IMR-90 (cell line): ENCODE measurements at regions of chr15 and their contacts with region 1.

Region 1: GRCh38 chr15:61243983-61244593 is 15.0 kb upstream of the RORA start:
- DNase-seq: no peak
- ATAC-seq: no peak
- H3K4me3 ChIP-seq: no peak overlapping the region
- H3K27ac ChIP-seq: no peak overlapping the region
- H3K4me1 ChIP-seq: no peaks in the 10 kb centered on the region
- H3K27me3 ChIP-seq: peaks cover 2% of the 10 kb centered on the region; the same call in 1 of the 2 replicates
- CTCF ChIP-seq: no peak
- POLR2A ChIP-seq: no peak
- RAD21 ChIP-seq: no peak

Region 2: DNA sequence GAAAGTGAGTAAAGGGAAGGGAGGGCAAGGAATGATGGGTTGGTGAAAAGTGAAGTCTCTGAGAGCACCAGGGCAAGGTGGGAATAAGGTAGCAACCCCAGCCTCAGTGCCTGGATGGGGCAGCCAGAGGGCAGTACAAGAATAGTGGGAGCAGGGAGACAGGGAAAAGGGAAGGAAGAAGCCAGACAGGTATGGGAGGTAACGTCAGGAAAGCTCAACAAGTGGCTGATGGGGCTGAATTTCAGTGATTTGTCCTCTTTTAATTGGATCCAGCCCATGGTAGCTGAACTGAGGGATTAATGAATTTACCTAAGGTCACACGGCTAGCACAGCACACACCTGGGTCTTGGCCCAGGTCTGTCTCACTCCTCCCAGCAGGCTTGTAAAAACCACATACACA is 27.6 kb before region 1 on chr15:
- CTCF ChIA-PET with region 1: interaction called, 10 read pairs
- POLR2A ChIA-PET with region 1: no interaction called
- dilution Hi-C with region 1: no loop called
- in situ Hi-C with region 1: no loop called
- intact Hi-C with region 1: no loop called
- DNase-seq: no peak
- ATAC-seq: no peak
- H3K4me3 ChIP-seq: no peak overlapping the region
- H3K27ac ChIP-seq: no peak overlapping the region
- H3K4me1 ChIP-seq: no peaks in the 10 kb centered on the region
- H3K27me3 ChIP-seq: no peaks in the 10 kb centered on the region
- CTCF ChIP-seq: no peak
- POLR2A ChIP-seq: no peak
- RAD21 ChIP-seq: no peak